Activated naive CD4-positive, alpha-beta T cell treated with anti-CD3 and anti-CD28 coated beads, Interleukin-2, amount 10 ng/mL, durations not matched to agents 7 days and 5 days (primary cell): ENCODE measurements at regions of chr9 and their contacts with region 1.

Region 1: DNA sequence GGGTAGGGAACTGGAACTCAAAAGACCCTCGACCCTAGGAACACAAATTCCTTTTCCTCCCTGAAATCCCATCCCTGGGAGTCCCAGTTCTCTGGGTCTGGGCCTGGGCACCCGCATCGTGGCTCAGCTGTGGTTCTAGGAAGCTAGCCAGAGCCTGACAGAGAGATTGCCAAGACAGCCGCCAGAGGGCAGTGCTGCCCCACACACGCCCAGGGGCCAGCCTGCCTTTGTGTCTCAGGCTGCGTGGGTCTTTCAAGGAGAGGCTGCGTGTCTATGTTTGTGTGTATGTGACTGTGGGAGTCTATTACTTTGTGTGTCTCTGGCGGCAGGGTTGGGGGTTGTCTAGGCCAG is 32.0 kb upstream of the TTLL11 start:
- DNase-seq: peak; percentile 84
- H3K4me3 Mint-ChIP-seq: no peak overlapping the region
- H3K27ac Mint-ChIP-seq: no peak overlapping the region
- H3K4me1 Mint-ChIP-seq: peaks cover 18% of the 10 kb centered on the region
- H3K27me3 Mint-ChIP-seq: peaks cover 71% of the 10 kb centered on the region

Region 2: GRCh38 chr9:121954477-121955140 is 170.5 kb before region 1 on chr9:
- CTCF ChIA-PET with region 1: no interaction called
- DNase-seq: no peak
- H3K4me3 Mint-ChIP-seq: no peak overlapping the region
- H3K27ac Mint-ChIP-seq: no peak overlapping the region
- H3K4me1 Mint-ChIP-seq: peaks cover 3% of the 10 kb centered on the region
- H3K27me3 Mint-ChIP-seq: peaks cover 2% of the 10 kb centered on the region

Region 3: GRCh38 chr9:122099271-122099869 is 25.8 kb before region 1 on chr9:
- CTCF ChIA-PET with region 1: interaction called, 248 read pairs
- DNase-seq: peak; percentile 85
- H3K4me3 Mint-ChIP-seq: peak overlapping the region; percentile 62
- H3K27ac Mint-ChIP-seq: no peak overlapping the region
- H3K4me1 Mint-ChIP-seq: peaks cover 12% of the 10 kb centered on the region
- H3K27me3 Mint-ChIP-seq: peaks cover 31% of the 10 kb centered on the region

Region 4: GRCh38 chr9:122107291-122107805 is 17.8 kb before region 1 on chr9:
- CTCF ChIA-PET with region 1: interaction called, 15 read pairs
- DNase-seq: no peak
- H3K4me3 Mint-ChIP-seq: no peak overlapping the region
- H3K27ac Mint-ChIP-seq: no peak overlapping the region
- H3K4me1 Mint-ChIP-seq: no peaks in the 10 kb centered on the region
- H3K27me3 Mint-ChIP-seq: peaks cover 4% of the 10 kb centered on the region

Region 5: GRCh38 chr9:122144836-122145591 is 19.9 kb after region 1 on chr9:
- CTCF ChIA-PET with region 1: interaction called, 16 read pairs
- DNase-seq: no peak
- H3K4me3 Mint-ChIP-seq: no peak overlapping the region
- H3K27ac Mint-ChIP-seq: no peak overlapping the region
- H3K4me1 Mint-ChIP-seq: no peaks in the 10 kb centered on the region
- H3K27me3 Mint-ChIP-seq: no peaks in the 10 kb centered on the region

Region 6: GRCh38 chr9:122350638-122351355 is 225.7 kb after region 1 on chr9:
- CTCF ChIA-PET with region 1: interaction called, 303 read pairs
- DNase-seq: peak; percentile 83
- H3K4me3 Mint-ChIP-seq: no peak overlapping the region
- H3K27ac Mint-ChIP-seq: no peak overlapping the region
- H3K4me1 Mint-ChIP-seq: peaks cover 16% of the 10 kb centered on the region
- H3K27me3 Mint-ChIP-seq: peaks cover 49% of the 10 kb centered on the region

Region 7: GRCh38 chr9:122453677-122454135 is 328.6 kb after region 1 on chr9:
- CTCF ChIA-PET with region 1: interaction called, 14 read pairs
- DNase-seq: no peak
- H3K4me3 Mint-ChIP-seq: no peak overlapping the region
- H3K27ac Mint-ChIP-seq: no peak overlapping the region
- H3K4me1 Mint-ChIP-seq: no peaks in the 10 kb centered on the region
- H3K27me3 Mint-ChIP-seq: peaks cover 9% of the 10 kb centered on the region